MCF 10A (cell line): ENCODE measurements at regions of chr2 and their contacts with region 1.

Region 1: GRCh38 chr2:239106314-239106908 is 258.5 kb downstream of the TWIST2 start:
- DNase-seq: peak; percentile 63
- H3K4me3 Mint-ChIP-seq: no peak overlapping the region
- H3K27ac Mint-ChIP-seq: no peak overlapping the region
- H3K4me1 Mint-ChIP-seq: peaks cover 9% of the 10 kb centered on the region
- H3K27me3 Mint-ChIP-seq: no peaks in the 10 kb centered on the region
- CTCF ChIP-seq: peak; percentile 80

Region 2: GRCh38 chr2:239035361-239036078 is 70.9 kb before region 1 on chr2:
- CTCF ChIA-PET with region 1: interaction called, 4 read pairs
- POLR2A ChIA-PET with region 1: no interaction called
- intact Hi-C with region 1: loop called (anchors 2 kb)
- DNase-seq: peak; percentile 30
- H3K4me3 Mint-ChIP-seq: no peak overlapping the region
- H3K27ac Mint-ChIP-seq: no peak overlapping the region
- H3K4me1 Mint-ChIP-seq: no peaks in the 10 kb centered on the region
- H3K27me3 Mint-ChIP-seq: peaks cover 27% of the 10 kb centered on the region
- CTCF ChIP-seq: peak; percentile 84

Region 3: DNA sequence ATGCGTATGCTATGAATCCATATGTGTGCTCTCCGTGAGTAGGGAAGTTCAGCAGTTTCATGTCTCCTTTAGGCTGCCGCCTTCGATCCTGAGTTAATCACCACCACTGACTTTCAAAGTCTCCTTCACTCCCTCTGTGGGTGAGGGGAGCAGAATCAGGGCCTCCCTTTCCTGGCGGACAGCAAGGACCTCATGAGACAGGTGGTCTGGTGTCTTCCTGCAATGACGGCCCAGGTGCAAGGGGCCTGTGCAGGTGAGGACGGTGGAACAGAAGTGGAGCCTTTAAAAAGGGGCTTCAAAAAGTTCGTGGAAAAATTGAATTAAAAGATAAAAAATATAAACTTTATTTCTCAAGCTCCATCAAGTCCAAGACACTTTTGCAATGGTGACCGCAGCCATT is 35.9 kb before region 1 on chr2:
- CTCF ChIA-PET with region 1: interaction called, 11 read pairs
- POLR2A ChIA-PET with region 1: no interaction called
- intact Hi-C with region 1: no loop called
- DNase-seq: no peak
- H3K4me3 Mint-ChIP-seq: no peak overlapping the region
- H3K27ac Mint-ChIP-seq: peak overlapping the region; percentile 63
- H3K4me1 Mint-ChIP-seq: peaks cover 7% of the 10 kb centered on the region
- H3K27me3 Mint-ChIP-seq: no peaks in the 10 kb centered on the region
- CTCF ChIP-seq: no peak